ENCODE measurements at regions of chr14 and their contacts with region 1.

Region 1: GRCh38 chr14:21299562-21300130 is 19.8 kb downstream of the RPGRIP1 start:
- DNase-seq: no peak
- H3K4me3 ChIP-seq: no peak overlapping the region
- H3K27ac ChIP-seq: no peak overlapping the region
- H3K4me1 ChIP-seq: no peaks in the 10 kb centered on the region
- H3K27me3 ChIP-seq: no peaks in the 10 kb centered on the region
- CTCF ChIP-seq: no peak
- POLR2A ChIP-seq: no peak

Region 2: GRCh38 chr14:21356511-21356910 is 56.9 kb after region 1 on chr14:
- intact Hi-C with region 1: loop called (anchors 2 kb)
- DNase-seq: no peak
- H3K4me3 ChIP-seq: no peak overlapping the region
- H3K27ac ChIP-seq: no peak overlapping the region
- H3K4me1 ChIP-seq: no peaks in the 10 kb centered on the region
- H3K27me3 ChIP-seq: no peaks in the 10 kb centered on the region
- CTCF ChIP-seq: no peak
- POLR2A ChIP-seq: no peak